WTC11 (cell line): ENCODE measurements at regions of chr10 and their contacts with region 1.

Region 1: GRCh38 chr10:114304017-114304570 is 65.0 kb downstream of the VWA2 start:
- DNase-seq: peak; percentile 83
- ATAC-seq: peak; percentile 35
- H3K4me3 Mint-ChIP-seq: peak overlapping the region; percentile 74
- H3K27ac Mint-ChIP-seq: no peak overlapping the region
- H3K4me1 Mint-ChIP-seq: peaks cover 5% of the 10 kb centered on the region
- H3K27me3 Mint-ChIP-seq: 0 out of 2 replicates have a peak, but pooled peaks cover 3% of the 10 kb centered on the region
- CTCF ChIP-seq: peak; percentile 76

Region 2: DNA sequence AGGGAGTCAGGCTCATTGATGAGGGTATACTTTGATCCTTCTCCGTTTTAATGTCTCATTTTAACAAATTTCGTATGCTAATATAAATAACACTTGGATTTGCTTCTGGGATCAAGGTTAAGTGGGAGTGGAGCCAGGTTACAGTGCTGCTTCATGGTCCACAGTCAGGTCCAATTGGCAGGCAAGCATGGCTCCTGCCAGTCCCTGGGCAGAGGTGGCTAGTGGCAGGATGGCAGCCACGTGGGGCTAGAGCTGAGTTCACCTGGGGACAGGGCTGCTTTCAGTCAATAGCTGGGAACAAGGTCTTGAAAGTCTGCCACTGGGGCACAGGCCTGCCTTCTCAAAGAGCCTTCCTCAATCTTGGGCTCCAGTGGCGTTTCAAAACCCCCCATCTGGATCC is 81.0 kb before region 1 on chr10:
- CTCF ChIA-PET with region 1: no interaction called
- POLR2A ChIA-PET with region 1: no interaction called
- DNase-seq: no peak
- ATAC-seq: no peak
- H3K4me3 Mint-ChIP-seq: no peak overlapping the region
- H3K27ac Mint-ChIP-seq: no peak overlapping the region
- H3K4me1 Mint-ChIP-seq: no peaks in the 10 kb centered on the region
- H3K27me3 Mint-ChIP-seq: no peaks in the 10 kb centered on the region
- CTCF ChIP-seq: no peak

Region 3: DNA sequence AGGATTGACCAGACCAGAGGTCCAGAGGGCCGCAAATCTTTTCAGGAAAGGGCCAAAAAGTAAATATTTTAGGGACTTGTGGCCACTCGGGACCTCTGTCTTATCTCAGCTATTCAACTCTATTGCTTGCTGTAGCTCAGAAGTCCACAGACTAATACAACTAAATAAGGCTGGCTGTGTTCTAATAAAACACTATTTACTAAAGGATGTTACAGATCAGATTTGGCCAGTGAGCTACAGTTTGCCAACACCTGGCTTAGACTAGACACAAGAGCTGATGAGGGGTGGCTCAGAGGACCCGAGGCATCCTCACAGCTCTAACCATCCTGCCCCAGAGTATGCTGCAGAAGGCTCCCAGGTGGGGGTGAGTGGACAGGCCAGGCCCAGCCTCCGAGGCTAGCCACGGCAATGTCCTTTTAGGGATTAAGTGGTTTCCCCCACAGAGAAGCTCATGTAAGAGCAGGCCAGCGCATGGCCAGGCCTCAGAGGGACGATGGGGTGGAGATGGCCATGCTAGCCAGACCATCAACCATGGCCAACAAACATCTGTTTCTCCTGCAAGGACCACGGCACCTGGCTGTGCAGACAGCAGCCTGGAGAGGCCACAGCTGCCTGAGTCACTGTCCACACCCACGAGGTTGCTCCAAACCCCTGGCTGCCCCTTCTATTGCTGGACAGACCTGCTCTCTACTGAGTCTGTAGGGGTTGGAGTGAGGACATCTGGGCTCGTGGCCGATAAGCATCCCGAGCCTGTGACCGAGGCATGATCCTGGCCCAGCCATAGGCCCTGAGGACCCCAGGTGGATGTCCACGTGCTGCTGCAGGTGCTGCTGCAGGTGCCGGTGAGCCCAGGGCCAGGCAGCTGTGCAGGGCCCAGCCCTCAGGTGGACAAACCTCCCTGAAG is 23.7 kb after region 1 on chr10:
- CTCF ChIA-PET with region 1: interaction called, 24 read pairs
- POLR2A ChIA-PET with region 1: no interaction called
- DNase-seq: no peak
- ATAC-seq: no peak
- H3K4me3 Mint-ChIP-seq: no peak overlapping the region
- H3K27ac Mint-ChIP-seq: no peak overlapping the region
- H3K4me1 Mint-ChIP-seq: no peaks in the 10 kb centered on the region
- H3K27me3 Mint-ChIP-seq: no peaks in the 10 kb centered on the region; the same call in 1 of the 2 replicates
- CTCF ChIP-seq: no peak

Region 4: DNA sequence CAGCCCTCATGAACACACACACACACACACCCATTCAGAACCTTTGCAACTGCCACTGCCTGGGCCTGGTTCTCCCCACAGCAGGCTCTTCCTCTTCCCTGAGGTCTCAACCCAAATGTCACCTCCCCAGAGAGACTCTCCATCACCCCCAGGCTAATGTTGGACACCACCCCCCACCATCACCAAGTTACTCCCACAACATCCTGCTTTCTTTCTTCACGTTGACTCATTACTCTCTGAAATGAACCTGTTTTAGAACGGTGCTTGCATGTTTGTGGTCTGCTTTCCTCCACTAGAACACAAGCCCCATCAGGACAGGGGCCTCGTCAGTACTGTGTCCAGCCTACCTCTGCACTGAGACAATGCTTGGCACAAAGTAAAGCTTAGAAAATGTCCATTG is 84.2 kb after region 1 on chr10:
- CTCF ChIA-PET with region 1: interaction called, 64 read pairs
- POLR2A ChIA-PET with region 1: interaction called, 9 read pairs
- DNase-seq: no peak
- ATAC-seq: no peak
- H3K4me3 Mint-ChIP-seq: no peak overlapping the region
- H3K27ac Mint-ChIP-seq: no peak overlapping the region
- H3K4me1 Mint-ChIP-seq: peaks cover 9% of the 10 kb centered on the region
- H3K27me3 Mint-ChIP-seq: no peaks in the 10 kb centered on the region
- CTCF ChIP-seq: no peak

Region 5: GRCh38 chr10:114437456-114438292 is 133.6 kb after region 1 on chr10:
- CTCF ChIA-PET with region 1: interaction called, 32 read pairs
- POLR2A ChIA-PET with region 1: no interaction called
- DNase-seq: no peak
- ATAC-seq: peak; percentile 60
- H3K4me3 Mint-ChIP-seq: no peak overlapping the region
- H3K27ac Mint-ChIP-seq: no peak overlapping the region
- H3K4me1 Mint-ChIP-seq: no peaks in the 10 kb centered on the region; the same call in 1 of the 2 replicates
- H3K27me3 Mint-ChIP-seq: no peaks in the 10 kb centered on the region
- CTCF ChIP-seq: no peak

Region 6: DNA sequence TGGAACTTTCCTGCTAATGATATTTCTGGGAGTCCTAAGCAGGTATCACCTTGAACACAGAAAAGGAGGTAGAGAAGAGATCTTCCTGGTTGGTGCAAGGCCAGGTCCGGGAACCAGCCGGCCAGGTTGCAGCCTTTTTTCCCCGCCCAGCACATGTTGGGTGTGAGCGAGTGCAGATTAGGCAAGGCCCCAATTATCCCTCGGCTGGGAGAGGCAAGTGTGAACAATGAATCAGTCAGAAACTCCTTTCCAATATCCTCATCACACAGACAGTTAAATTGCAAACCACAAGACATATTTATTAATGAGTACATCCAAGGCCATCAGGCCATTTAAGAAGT is 215.2 kb after region 1 on chr10:
- CTCF ChIA-PET with region 1: interaction called, 10 read pairs
- POLR2A ChIA-PET with region 1: no interaction called
- DNase-seq: no peak
- ATAC-seq: peak; percentile 10; the same call in 1 of the 2 replicates
- H3K4me3 Mint-ChIP-seq: no peak overlapping the region
- H3K27ac Mint-ChIP-seq: peak overlapping the region; percentile 28; the same call in 1 of the 2 replicates
- H3K4me1 Mint-ChIP-seq: peaks cover 82% of the 10 kb centered on the region
- H3K27me3 Mint-ChIP-seq: no peaks in the 10 kb centered on the region
- CTCF ChIP-seq: no peak

Region 7: GRCh38 chr10:114694752-114695151 is 390.7 kb after region 1 on chr10:
- CTCF ChIA-PET with region 1: interaction called, 10 read pairs
- POLR2A ChIA-PET with region 1: no interaction called
- DNase-seq: peak; percentile 71
- ATAC-seq: peak; percentile 88
- H3K4me3 Mint-ChIP-seq: no peak overlapping the region
- H3K27ac Mint-ChIP-seq: no peak overlapping the region
- H3K4me1 Mint-ChIP-seq: peaks cover 25% of the 10 kb centered on the region
- H3K27me3 Mint-ChIP-seq: no peaks in the 10 kb centered on the region
- CTCF ChIP-seq: peak; percentile 64